ENCODE measurements at regions of chr3 and their contacts with region 1.

Region 1: GRCh38 chr3:171646357-171647133 is 163.7 kb downstream of the PLD1 start:
- DNase-seq: no peak
- H3K4me3 ChIP-seq: no peak overlapping the region
- H3K27ac ChIP-seq: no peak overlapping the region
- H3K4me1 ChIP-seq: no peaks in the 10 kb centered on the region
- H3K27me3 ChIP-seq: no peaks in the 10 kb centered on the region
- CTCF ChIP-seq: peak; percentile 54

Region 2: DNA sequence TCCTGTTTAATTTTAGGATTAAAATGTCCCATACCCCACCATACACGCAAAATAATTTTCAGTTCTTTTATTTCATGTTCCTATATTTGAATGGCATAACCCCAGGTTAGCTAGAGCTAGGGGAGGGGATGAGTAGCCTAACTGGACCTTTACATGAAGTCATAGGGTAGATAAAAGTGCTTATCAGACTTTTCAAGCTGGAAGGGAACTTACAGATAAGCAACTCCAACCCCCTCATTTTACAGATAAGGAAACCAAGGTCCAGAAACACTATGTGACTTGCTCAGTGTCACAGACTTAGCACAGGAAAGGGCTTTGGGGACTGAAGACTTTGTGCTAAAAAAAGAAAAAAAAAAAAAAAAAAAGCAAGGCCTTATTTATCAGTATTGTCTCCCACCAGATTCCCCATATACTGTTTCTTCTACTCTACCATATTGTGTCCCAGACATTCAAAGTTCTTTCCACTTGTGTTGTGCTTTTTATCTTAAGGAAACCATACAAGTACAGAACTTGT is 175.8 kb before region 1 on chr3:
- intact Hi-C with region 1: no loop called
- DNase-seq: no peak
- H3K4me3 ChIP-seq: no peak overlapping the region
- H3K27ac ChIP-seq: no peak overlapping the region
- H3K4me1 ChIP-seq: no peaks in the 10 kb centered on the region
- H3K27me3 ChIP-seq: no peaks in the 10 kb centered on the region
- CTCF ChIP-seq: no peak

Region 3: DNA sequence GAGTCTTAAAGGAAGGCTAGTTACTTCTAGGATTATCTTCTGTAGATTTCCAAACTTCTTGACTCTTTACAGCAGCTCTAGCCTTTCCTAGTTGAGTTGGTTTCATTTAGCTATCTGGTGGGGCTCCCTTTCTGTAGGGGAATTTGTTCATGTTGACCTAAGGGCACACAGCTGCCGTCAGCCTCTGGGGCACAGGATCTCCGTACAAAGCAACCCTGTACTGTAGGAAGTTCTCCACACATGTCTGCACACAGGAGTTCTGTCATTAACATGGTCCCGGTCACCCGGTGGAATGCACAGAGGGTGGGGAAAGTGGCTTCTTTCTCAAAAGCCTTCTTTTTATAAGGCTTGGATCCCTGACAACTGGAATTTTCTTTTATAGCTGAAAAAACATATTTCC is 97.6 kb before region 1 on chr3:
- intact Hi-C with region 1: no loop called
- DNase-seq: no peak
- H3K4me3 ChIP-seq: no peak overlapping the region
- H3K27ac ChIP-seq: no peak overlapping the region
- H3K4me1 ChIP-seq: no peaks in the 10 kb centered on the region
- H3K27me3 ChIP-seq: no peaks in the 10 kb centered on the region
- CTCF ChIP-seq: no peak

Region 4: DNA sequence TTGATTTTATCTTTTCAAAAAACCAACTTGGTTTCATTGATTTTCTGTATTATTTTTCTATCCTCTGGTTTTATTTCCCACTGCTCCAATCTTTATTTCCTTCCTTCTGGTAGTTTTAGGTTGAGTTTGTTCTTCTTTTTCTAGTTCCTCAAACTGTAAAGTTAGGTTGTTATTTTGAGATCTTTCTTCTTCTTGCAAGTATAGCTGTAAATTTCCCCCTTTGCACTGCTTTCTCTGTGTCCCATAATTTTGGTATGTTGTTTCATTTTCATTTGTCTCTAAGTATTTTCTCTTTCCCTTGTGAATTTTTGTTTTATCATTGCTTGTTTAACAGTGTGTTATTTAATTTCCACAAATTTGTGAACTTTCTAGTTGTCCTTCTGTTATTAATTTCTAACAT is 43.7 kb after region 1 on chr3:
- intact Hi-C with region 1: no loop called
- DNase-seq: no peak
- H3K4me3 ChIP-seq: no peak overlapping the region
- H3K27ac ChIP-seq: no peak overlapping the region
- H3K4me1 ChIP-seq: no peaks in the 10 kb centered on the region
- H3K27me3 ChIP-seq: no peaks in the 10 kb centered on the region
- CTCF ChIP-seq: no peak

Region 5: GRCh38 chr3:171772427-171773056 is 126.0 kb after region 1 on chr3:
- intact Hi-C with region 1: loop called (anchors 5 kb)
- DNase-seq: peak; percentile 78
- H3K4me3 ChIP-seq: no peak overlapping the region
- H3K27ac ChIP-seq: no peak overlapping the region
- H3K4me1 ChIP-seq: no peaks in the 10 kb centered on the region
- H3K27me3 ChIP-seq: no peaks in the 10 kb centered on the region
- CTCF ChIP-seq: peak; percentile 56

Region 6: GRCh38 chr3:171809821-171810628 is 163.5 kb after region 1 on chr3 and contains the start of gene PLD1:
- intact Hi-C with region 1: no loop called
- DNase-seq: peak; percentile 92
- H3K4me3 ChIP-seq: peak within 1 kb of the TSS; percentile 69
- H3K27ac ChIP-seq: peak within 1 kb of the TSS; percentile 96
- H3K4me1 ChIP-seq: peaks cover 4% of the 10 kb centered on the region
- H3K27me3 ChIP-seq: no peaks in the 10 kb centered on the region
- CTCF ChIP-seq: no peak
- total RNA-seq, gene PLD1: 49.6 to 81.3 TPM

Region 7: GRCh38 chr3:171829841-171830517 is 183.4 kb after region 1 on chr3:
- intact Hi-C with region 1: loop called (anchors 5 kb)
- DNase-seq: peak; percentile 82
- H3K4me3 ChIP-seq: no peak overlapping the region
- H3K27ac ChIP-seq: peak overlapping the region; percentile 5
- H3K4me1 ChIP-seq: no peaks in the 10 kb centered on the region
- H3K27me3 ChIP-seq: no peaks in the 10 kb centered on the region
- CTCF ChIP-seq: peak; percentile 77

Region 8: GRCh38 chr3:172334696-172335207 is 688.2 kb after region 1 on chr3:
- intact Hi-C with region 1: loop called (anchors 5 kb)
- DNase-seq: no peak
- H3K4me3 ChIP-seq: no peak overlapping the region
- H3K27ac ChIP-seq: no peak overlapping the region
- H3K4me1 ChIP-seq: no peaks in the 10 kb centered on the region
- H3K27me3 ChIP-seq: no peaks in the 10 kb centered on the region
- CTCF ChIP-seq: no peak

Region 9: DNA sequence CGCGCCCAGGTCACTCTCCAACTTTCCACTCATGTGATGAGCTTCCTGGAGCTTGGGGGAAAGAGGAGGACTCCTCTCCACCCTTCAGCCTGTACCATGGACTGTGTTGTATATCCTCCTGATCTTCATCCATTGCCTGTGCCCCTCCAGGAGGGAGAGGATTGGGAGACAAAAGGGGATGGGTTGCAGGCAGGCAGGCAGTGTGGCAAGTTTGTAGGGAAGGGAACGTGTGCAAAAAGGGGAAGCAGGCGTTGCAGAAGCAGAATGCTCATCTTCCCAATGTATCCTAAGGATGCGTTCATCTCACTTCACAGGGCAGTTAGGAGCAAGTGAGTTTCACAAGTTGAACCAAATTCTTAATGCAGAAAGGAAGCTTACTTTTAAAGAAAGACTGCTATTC is 829.8 kb after region 1 on chr3:
- intact Hi-C with region 1: loop called (anchors 10 kb)
- DNase-seq: no peak
- H3K4me3 ChIP-seq: no peak overlapping the region
- H3K27ac ChIP-seq: no peak overlapping the region
- H3K4me1 ChIP-seq: no peaks in the 10 kb centered on the region
- H3K27me3 ChIP-seq: no peaks in the 10 kb centered on the region
- CTCF ChIP-seq: no peak

Measured in colonic mucosa (tissue), 4 donors.